ENCODE measurements at regions of chr11 and their contacts with region 1.

Region 1: DNA sequence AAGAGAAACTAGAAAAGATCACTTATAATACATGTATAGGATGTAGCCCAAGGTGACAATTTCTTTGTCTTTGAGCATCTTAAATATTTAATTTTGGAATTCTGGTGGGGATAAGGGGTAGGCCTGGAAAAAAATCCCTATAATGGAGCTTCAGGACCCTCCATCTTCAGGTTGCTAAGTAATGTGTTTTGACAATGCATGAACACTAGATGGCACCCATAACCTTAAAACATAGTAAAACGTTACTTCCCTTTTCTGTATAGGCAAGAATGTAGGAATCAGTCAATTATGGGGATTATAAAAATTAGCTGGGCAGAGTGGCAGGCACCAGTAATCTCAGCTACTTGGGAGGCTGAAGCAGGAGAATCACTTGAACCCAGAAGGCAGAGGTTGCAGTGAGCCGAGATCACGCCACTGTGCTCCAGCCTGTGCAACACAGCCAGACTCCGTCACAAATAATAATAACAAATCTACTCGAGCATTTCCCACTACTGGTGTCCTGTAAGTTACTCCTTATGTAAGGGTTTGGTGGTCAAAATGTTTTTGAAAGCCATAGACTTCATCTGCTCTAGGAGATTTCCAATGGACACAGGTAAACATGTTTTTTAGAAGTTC is 541.9 kb upstream of the CCDC90B start:
- DNase-seq: no peak
- H3K4me3 ChIP-seq: no peak overlapping the region
- H3K27ac ChIP-seq: no peak overlapping the region
- H3K4me1 ChIP-seq: no peaks in the 10 kb centered on the region
- H3K27me3 ChIP-seq: no peaks in the 10 kb centered on the region
- CTCF ChIP-seq: peak in 2 of 3 experiments; percentile 39 to 60
- POLR2A ChIP-seq: no peak

Region 2: DNA sequence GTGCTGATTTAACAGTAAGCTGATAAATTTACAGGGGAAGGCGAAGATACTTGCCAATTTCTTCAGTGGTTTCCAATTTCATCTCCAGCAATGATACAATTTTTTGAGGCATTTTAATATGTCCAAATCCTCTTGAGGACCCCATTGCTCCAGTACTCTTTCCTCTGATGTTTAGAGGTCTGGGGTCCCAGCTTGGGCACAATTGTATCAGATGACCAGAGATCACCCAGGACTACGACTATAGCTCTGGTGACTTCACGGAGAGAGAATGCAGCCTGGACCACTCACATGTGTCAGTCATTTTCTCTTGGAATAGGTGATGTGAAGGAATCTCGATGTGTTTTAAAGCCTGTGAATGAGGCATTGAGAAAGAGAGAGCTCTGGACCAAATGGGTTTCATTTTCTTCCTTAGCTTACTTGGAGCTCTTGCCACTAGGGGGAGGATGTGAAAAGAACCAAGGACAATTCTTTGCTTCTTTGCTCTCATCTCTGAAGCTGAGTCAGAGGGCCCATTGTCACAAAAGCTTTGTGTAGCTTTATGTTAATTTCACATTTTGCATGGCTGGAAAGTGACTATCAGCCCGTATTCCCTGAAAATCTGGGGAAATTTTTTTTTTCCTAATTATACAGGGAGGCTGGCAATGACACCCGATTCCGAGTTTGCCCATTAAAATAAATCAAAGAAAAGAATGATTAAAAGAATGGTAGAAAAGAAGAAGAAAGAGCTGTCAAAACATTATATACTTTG is 535.2 kb before region 1 on chr11:
- intact Hi-C with region 1: loop called (anchors 10 kb)
- DNase-seq: peak; percentile 49
- H3K4me3 ChIP-seq: no peak overlapping the region
- H3K27ac ChIP-seq: no peak overlapping the region
- H3K4me1 ChIP-seq: no peaks in the 10 kb centered on the region
- H3K27me3 ChIP-seq: no peaks in the 10 kb centered on the region
- CTCF ChIP-seq: peak; percentile 60 to 72 (median 60)
- POLR2A ChIP-seq: no peak

Region 3: DNA sequence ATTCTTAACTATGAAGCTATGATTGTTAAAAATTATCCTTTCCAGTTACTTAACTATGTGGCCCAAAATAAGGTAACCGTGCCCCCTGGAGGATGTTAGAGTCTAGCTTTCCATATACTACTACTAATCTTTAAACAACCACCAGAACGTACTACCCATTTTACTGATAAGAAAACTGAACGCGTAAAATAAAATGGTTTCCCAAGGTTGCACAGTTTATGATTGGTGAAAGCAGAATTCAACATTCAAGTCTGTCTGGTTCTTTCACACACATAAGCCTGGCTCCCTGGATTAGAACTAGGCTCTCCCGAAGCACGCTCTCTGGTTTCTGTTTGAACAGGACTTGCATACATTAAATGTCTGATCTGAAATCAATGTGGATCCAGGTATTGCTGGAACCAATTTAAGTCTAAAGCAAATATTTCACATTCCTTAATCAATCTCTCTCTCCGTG is 104.0 kb before region 1 on chr11:
- intact Hi-C with region 1: no loop called
- DNase-seq: peak; percentile 69
- H3K4me3 ChIP-seq: peak overlapping the region; percentile 11 to 13
- H3K27ac ChIP-seq: no peak overlapping the region
- H3K4me1 ChIP-seq: peaks cover 5% of the 10 kb centered on the region
- H3K27me3 ChIP-seq: no peaks in the 10 kb centered on the region
- CTCF ChIP-seq: no peak
- POLR2A ChIP-seq: no peak

Region 4: GRCh38 chr11:84580428-84580827 is 752.4 kb after region 1 on chr11:
- intact Hi-C with region 1: no loop called
- DNase-seq: no peak
- H3K4me3 ChIP-seq: no peak overlapping the region
- H3K27ac ChIP-seq: no peak overlapping the region
- H3K4me1 ChIP-seq: no peaks in the 10 kb centered on the region
- H3K27me3 ChIP-seq: no peaks in the 10 kb centered on the region
- CTCF ChIP-seq: no peak
- POLR2A ChIP-seq: no peak

Measured in testis (tissue), 5 donors.